A549 (cell line): ENCODE measurements at regions of chr2 and their contacts with region 1.

Region 1: GRCh38 chr2:63692002-63692606 is 103.3 kb downstream of the MDH1 start:
- DNase-seq: peak; percentile 43 to 62
- ATAC-seq: peak; percentile 59 to 81; a peak in 4 of 6 replicates
- H3K4me3 ChIP-seq: no peak overlapping the region
- H3K27ac ChIP-seq: no peak overlapping the region
- H3K4me1 ChIP-seq: no peaks in the 10 kb centered on the region; the same call in 2 of the 3 replicates
- CTCF ChIP-seq: peak; percentile 93
- EP300 ChIP-seq: no peak
- POLR2A ChIP-seq: no peak
- RAD21 ChIP-seq: peak; percentile 76 to 95

Region 2: DNA sequence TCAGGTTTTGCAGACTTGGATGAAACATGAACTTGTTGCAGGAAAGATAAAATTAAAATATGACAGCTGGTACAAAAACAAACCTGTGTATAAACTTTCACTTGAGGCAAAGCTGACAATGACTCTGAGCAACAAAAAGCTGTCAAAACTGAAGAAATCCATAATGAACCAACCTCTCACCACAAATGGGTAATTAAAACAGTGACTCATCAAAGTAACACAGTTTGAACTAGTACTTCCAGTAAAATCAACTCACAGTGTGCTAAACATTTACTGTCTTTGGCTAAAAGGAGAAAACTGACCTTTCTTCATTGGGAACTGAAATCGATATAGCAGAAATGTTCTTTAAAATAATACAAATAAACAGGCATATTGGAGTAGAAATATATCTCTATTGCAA is 313.5 kb before region 1 on chr2:
- CTCF ChIA-PET with region 1: no interaction called
- POLR2A ChIA-PET with region 1: no interaction called
- DNase-seq: no peak
- ATAC-seq: no peak
- H3K4me3 ChIP-seq: no peak overlapping the region
- H3K27ac ChIP-seq: no peak overlapping the region
- H3K4me1 ChIP-seq: no peaks in the 10 kb centered on the region
- CTCF ChIP-seq: no peak
- EP300 ChIP-seq: no peak
- POLR2A ChIP-seq: no peak
- RAD21 ChIP-seq: no peak

Region 3: DNA sequence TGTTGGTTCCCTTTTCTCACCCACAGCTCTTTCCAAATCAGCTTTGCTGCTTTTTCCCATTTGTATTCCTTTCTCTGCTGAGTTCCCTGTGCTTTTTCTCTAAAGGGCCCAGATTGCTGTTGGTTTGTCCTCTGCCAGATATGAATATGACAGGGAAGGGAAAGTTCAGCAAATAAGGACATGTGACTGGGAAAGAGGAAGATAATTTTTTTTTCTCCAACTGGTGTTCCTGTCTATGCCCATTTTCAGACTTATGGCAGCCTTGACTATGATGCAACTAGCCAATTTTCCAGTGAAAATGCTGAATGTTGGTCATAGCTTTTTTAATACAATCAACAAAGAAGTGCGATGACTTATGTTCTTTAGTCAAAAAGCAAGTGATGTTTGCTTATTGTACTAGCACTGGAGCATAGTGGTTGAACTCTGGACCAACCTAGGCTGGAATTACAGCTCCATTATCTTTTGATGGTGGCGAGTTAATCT is 95.7 kb before region 1 on chr2:
- CTCF ChIA-PET with region 1: no interaction called
- POLR2A ChIA-PET with region 1: no interaction called
- DNase-seq: no peak
- ATAC-seq: no peak
- H3K4me3 ChIP-seq: no peak overlapping the region
- H3K27ac ChIP-seq: no peak overlapping the region
- H3K4me1 ChIP-seq: no peaks in the 10 kb centered on the region
- CTCF ChIP-seq: no peak
- EP300 ChIP-seq: no peak
- POLR2A ChIP-seq: no peak
- RAD21 ChIP-seq: no peak

Region 4: DNA sequence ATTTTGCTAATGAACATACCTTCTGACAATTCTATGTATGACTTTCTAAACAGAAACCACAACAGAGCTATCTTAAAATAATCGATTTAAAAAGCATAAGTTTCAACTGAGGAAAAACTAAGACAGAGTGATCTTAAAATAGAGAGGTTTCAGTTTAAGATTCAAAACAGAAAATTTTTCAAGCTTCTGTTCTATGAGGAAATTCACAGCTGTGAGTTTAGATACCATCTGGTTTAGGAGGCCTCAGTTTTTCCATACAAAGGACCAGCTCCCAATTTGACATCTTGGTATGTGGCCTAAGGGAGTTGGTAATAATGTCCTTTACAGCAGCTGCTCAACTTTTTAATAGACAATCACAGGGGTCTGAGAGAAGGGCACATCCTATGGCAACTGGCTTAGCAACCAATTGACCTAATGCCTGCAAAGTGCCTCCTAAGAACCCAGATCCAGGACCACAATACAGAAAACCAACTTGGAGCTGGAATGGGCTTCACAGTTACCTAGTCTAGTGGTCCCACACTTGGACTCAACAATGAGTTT is 63.6 kb before region 1 on chr2:
- CTCF ChIA-PET with region 1: no interaction called
- POLR2A ChIA-PET with region 1: no interaction called
- DNase-seq: no peak
- ATAC-seq: no peak
- H3K4me3 ChIP-seq: no peak overlapping the region
- H3K27ac ChIP-seq: no peak overlapping the region
- H3K4me1 ChIP-seq: no peaks in the 10 kb centered on the region
- CTCF ChIP-seq: no peak
- EP300 ChIP-seq: no peak
- POLR2A ChIP-seq: no peak
- RAD21 ChIP-seq: no peak

Region 5: DNA sequence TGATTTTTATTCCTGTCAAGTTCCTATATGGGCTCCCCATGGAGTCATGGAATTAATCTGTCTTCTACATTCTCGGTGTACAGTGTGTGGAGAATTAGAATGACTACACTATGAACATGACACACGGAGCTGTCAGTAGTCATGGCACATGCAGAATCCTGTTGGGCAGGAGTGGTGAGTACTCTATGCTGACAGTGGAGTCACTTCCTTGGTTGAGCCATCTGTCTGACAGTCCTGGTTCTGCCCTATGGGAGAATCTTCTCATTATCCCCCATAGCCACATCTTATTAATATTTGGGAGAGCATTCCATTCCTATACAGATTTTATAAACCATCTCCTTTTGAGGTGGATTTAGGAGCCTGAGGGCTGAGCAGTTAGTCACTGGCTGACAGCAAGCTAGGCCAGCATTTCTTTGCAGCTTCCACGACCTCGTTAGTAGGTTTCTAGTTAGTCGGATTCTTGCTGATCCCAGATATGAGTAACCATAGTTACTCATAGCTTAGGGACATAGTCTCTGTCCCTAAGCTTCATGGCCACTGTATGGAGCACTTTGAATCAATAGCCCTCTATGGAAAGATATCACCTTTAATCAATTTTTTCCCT is 12.8 kb before region 1 on chr2:
- CTCF ChIA-PET with region 1: interaction called, 15 read pairs
- POLR2A ChIA-PET with region 1: no interaction called
- DNase-seq: no peak
- ATAC-seq: no peak
- H3K4me3 ChIP-seq: no peak overlapping the region
- H3K27ac ChIP-seq: no peak overlapping the region
- H3K4me1 ChIP-seq: no peaks in the 10 kb centered on the region
- CTCF ChIP-seq: no peak
- EP300 ChIP-seq: no peak
- POLR2A ChIP-seq: no peak
- RAD21 ChIP-seq: no peak

Region 6: GRCh38 chr2:63856303-63856603 is 164.1 kb after region 1 on chr2:
- CTCF ChIA-PET with region 1: interaction called, 94 read pairs
- POLR2A ChIA-PET with region 1: no interaction called
- DNase-seq: no peak
- ATAC-seq: no peak
- H3K4me3 ChIP-seq: no peak overlapping the region
- H3K27ac ChIP-seq: no peak overlapping the region
- H3K4me1 ChIP-seq: peaks cover 16% of the 10 kb centered on the region
- CTCF ChIP-seq: no peak
- EP300 ChIP-seq: no peak
- POLR2A ChIP-seq: no peak
- RAD21 ChIP-seq: no peak

Region 7: GRCh38 chr2:63861220-63861822 is 169.2 kb after region 1 on chr2:
- CTCF ChIA-PET with region 1: interaction called, 94 read pairs
- POLR2A ChIA-PET with region 1: no interaction called
- DNase-seq: peak; percentile 32 to 77
- ATAC-seq: peak; percentile 39 to 83; a peak in 5 of 6 replicates
- H3K4me3 ChIP-seq: no peak overlapping the region
- H3K27ac ChIP-seq: no peak overlapping the region
- H3K4me1 ChIP-seq: peaks cover 29% of the 10 kb centered on the region
- CTCF ChIP-seq: peak; percentile 88
- EP300 ChIP-seq: no peak
- POLR2A ChIP-seq: no peak
- RAD21 ChIP-seq: peak; percentile 85 to 87

Region 8: DNA sequence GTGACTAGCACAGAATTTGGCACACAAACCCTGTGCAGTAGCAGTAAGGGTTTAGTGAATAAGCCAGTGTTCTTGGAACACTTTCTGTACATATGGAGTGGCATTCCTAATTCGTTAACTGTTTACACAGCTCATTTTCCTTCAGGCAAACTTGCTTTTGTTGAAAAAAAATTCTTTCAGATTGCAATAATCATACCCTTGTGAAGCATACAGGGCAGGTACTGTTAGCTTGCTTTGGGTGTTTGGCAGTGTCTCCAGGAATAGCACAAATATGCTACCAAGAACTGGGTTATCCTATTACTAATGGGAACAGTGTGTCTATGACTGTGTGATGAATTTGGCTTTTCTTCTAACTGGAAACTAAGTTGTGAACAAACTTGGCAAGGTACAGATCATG is 183.0 kb after region 1 on chr2:
- CTCF ChIA-PET with region 1: interaction called, 38 read pairs
- POLR2A ChIA-PET with region 1: no interaction called
- DNase-seq: no peak
- ATAC-seq: no peak
- H3K4me3 ChIP-seq: no peak overlapping the region
- H3K27ac ChIP-seq: no peak overlapping the region
- H3K4me1 ChIP-seq: peaks cover 20% of the 10 kb centered on the region
- CTCF ChIP-seq: no peak
- EP300 ChIP-seq: no peak
- POLR2A ChIP-seq: no peak
- RAD21 ChIP-seq: no peak